Activated naive CD4-positive, alpha-beta T cell treated with anti-CD3 and anti-CD28 coated beads, Interleukin-2, amount 10 ng/mL, durations not matched to agents 7 days and 5 days (primary cell): ENCODE measurements at regions of chr11 and their contacts with region 1.

Region 1: DNA sequence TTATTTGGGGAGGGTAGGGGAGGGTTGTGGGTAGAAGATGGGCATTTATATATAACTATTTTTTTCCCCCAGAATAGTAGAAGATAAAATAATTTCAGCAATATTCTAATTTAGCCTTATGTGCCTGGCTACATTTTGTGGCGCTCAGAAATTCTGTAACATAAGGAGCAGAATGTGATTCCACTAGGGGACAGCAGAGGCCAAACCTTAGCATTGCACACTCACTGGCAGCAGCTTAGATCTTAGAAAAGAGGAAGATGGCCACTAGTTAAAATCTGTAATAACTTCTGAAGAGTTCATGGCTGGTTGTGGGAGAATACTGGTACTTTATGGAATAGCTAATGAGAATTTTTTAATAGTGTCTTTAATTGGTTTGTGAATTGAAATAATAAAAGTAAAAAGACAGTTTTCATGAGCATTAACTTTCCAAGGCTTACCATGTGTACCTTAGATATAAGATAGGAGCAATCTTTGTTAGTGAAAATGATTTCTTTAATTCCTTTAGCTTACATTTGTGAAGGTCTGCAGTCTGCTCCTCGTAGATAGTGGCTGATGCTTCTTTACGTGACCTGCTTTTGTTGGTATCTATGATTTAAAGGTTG is 33.1 kb downstream of the DDX10 start:
- DNase-seq: peak; percentile 66
- H3K4me3 Mint-ChIP-seq: no peak overlapping the region
- H3K27ac Mint-ChIP-seq: no peak overlapping the region
- H3K4me1 Mint-ChIP-seq: no peaks in the 10 kb centered on the region
- H3K27me3 Mint-ChIP-seq: no peaks in the 10 kb centered on the region

Region 2: DNA sequence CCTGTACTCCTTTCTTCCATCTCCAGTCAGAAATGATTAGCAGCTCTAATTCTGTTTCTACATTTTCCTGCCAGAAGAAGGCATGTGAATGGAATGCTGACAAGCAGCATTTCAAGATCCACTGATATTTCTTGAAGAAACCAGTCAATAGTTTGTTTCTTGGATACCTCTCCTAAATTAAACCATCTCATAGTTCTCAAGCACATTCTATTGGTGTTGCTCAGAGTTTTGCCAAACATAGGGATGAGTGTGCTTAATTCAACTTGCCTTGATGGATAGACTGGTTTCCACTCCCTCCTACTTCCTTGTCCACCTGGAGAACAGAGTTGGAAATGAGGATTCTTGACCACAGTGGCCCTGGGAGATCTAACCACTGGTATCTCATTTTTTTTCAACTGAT is 62.9 kb before region 1 on chr11:
- CTCF ChIA-PET with region 1: no interaction called
- DNase-seq: no peak
- H3K4me3 Mint-ChIP-seq: no peak overlapping the region
- H3K27ac Mint-ChIP-seq: no peak overlapping the region
- H3K4me1 Mint-ChIP-seq: no peaks in the 10 kb centered on the region
- H3K27me3 Mint-ChIP-seq: peaks cover 12% of the 10 kb centered on the region

Region 3: DNA sequence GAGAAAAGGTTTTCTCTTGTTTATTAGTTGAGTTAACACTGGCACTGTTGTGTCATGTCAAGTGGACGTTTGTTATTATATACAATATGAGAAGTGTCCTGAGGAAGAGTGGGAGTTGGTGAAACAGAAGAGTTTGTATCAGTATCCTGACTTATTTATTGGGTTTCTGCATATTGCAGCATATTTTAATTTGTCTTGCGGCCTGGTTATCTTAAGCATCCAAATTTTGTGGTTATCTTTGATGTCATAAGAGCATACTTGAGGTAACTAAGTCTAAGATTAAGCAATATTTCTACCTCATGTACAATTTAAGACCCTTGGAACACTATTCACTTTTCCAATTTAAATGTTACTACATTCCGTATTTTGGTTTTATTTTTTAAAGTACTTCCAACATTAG is 70.4 kb after region 1 on chr11:
- CTCF ChIA-PET with region 1: no interaction called
- DNase-seq: no peak
- H3K4me3 Mint-ChIP-seq: no peak overlapping the region
- H3K27ac Mint-ChIP-seq: no peak overlapping the region
- H3K4me1 Mint-ChIP-seq: no peaks in the 10 kb centered on the region
- H3K27me3 Mint-ChIP-seq: no peaks in the 10 kb centered on the region

Region 4: GRCh38 chr11:108825381-108825780 is 127.4 kb after region 1 on chr11:
- CTCF ChIA-PET with region 1: no interaction called
- DNase-seq: no peak
- H3K4me3 Mint-ChIP-seq: no peak overlapping the region
- H3K27ac Mint-ChIP-seq: no peak overlapping the region
- H3K4me1 Mint-ChIP-seq: peaks cover 12% of the 10 kb centered on the region
- H3K27me3 Mint-ChIP-seq: no peaks in the 10 kb centered on the region

Region 5: GRCh38 chr11:108871152-108871551 is 173.2 kb after region 1 on chr11:
- CTCF ChIA-PET with region 1: interaction called, 35 read pairs
- DNase-seq: peak; percentile 69
- H3K4me3 Mint-ChIP-seq: no peak overlapping the region
- H3K27ac Mint-ChIP-seq: no peak overlapping the region
- H3K4me1 Mint-ChIP-seq: peaks cover 6% of the 10 kb centered on the region
- H3K27me3 Mint-ChIP-seq: no peaks in the 10 kb centered on the region